ENCODE measurements at regions of chr6 and their contacts with region 1.

Region 1: DNA sequence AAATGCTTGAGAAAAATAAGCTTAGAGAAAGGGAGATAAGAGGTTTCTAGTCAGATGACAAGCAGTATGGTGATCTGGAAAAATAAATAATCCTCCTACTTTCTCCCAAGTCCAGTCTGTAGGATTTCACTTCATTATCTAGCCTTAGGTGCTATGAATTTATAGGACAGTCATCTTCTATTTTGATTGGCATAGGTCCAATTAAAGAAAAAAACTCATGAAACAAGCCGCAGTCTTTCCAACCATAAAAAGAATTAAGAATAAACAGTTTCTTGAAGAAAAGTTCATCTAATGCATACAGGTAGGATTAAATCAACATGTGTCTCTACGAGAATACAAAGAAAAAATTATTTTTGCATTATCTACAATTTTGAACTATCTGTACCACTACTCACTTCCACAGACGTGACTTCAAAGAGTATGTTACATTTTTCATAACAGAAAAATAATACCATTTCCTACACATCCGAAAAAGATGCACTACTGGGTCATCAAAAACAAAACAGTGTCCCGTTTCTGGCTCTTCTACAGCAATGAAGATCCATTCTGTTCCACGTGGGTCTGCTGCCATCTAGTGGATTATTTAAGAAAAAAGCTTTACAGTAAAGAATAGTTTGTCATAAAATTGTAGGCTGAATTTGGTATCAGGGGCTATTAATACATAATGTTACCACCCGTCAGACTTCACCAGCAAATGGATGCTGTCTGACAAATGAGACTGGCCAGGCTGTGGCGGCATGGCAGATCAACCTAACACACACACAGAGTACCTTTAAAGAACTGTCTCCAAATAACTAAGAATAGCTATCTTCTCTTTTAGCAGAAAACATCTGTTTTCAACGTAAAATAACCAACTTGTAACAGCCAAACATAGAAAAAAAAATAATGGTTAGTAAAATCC is 28.9 kb downstream of the STX7 start:
- DNase-seq: peak; percentile 77
- ATAC-seq: peak; percentile 77
- H3K4me3 ChIP-seq: no peak overlapping the region
- H3K27ac ChIP-seq: no peak overlapping the region
- H3K4me1 ChIP-seq: peaks cover 3% of the 10 kb centered on the region; the same call in 1 of the 2 replicates
- H3K27me3 ChIP-seq: no peaks in the 10 kb centered on the region
- CTCF ChIP-seq: peak; percentile 77

Region 2: DNA sequence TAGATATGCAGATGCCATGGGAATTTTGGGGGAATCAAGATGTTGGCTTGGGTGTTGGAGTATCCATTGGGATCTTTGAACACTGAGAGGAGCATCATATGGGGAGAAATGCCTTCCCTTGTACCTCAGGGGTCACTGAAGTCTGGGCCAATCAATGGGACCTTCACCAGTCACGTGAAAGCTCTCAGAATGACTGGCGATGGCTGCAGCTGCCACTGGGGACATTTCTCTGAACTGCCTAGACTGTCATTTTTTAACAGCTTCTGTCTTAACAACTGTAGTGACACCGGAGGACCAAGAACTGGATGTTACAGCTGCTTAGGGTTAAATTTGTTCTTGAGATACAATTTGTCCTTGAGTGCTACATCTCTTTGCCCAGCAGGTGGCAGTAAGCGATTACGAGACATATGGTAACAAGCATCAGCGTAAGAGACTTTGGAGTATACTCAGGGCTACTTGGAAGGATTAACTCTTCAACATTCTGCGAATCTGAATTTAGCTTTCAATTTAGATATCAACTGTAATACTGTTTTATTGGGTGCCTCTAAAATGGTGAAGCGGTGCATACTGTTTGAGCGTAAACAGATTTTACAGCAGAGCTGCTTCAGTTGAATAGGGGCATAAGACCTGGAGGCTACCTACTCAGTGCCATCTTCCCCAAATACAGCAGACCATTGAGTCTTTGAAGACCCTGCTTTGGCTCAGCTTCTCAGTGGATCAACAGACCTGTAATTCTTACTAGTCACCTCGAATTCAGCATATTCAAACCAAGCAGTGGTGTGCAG is 568.9 kb before region 1 on chr6:
- CTCF ChIA-PET with region 1: no interaction called
- POLR2A ChIA-PET with region 1: no interaction called
- intact Hi-C with region 1: loop called (anchors 5 kb)
- DNase-seq: peak; percentile 74
- ATAC-seq: peak; percentile 67
- H3K4me3 ChIP-seq: no peak overlapping the region
- H3K27ac ChIP-seq: no peak overlapping the region
- H3K4me1 ChIP-seq: peaks cover 9% of the 10 kb centered on the region
- H3K27me3 ChIP-seq: no peaks in the 10 kb centered on the region
- CTCF ChIP-seq: peak; percentile 83

Region 3: GRCh38 chr6:132300323-132300949 is 183.6 kb before region 1 on chr6:
- CTCF ChIA-PET with region 1: no interaction called
- POLR2A ChIA-PET with region 1: no interaction called
- intact Hi-C with region 1: loop called (anchors 1 kb)
- DNase-seq: peak; percentile 66
- ATAC-seq: peak; percentile 87
- H3K4me3 ChIP-seq: no peak overlapping the region
- H3K27ac ChIP-seq: no peak overlapping the region
- H3K4me1 ChIP-seq: no peaks in the 10 kb centered on the region
- H3K27me3 ChIP-seq: no peaks in the 10 kb centered on the region
- CTCF ChIP-seq: peak; percentile 70

Region 4: GRCh38 chr6:132320007-132320406 is 164.0 kb before region 1 on chr6:
- CTCF ChIA-PET with region 1: no interaction called
- POLR2A ChIA-PET with region 1: no interaction called
- intact Hi-C with region 1: no loop called
- DNase-seq: no peak
- ATAC-seq: no peak
- H3K4me3 ChIP-seq: no peak overlapping the region
- H3K27ac ChIP-seq: no peak overlapping the region
- H3K4me1 ChIP-seq: no peaks in the 10 kb centered on the region
- H3K27me3 ChIP-seq: no peaks in the 10 kb centered on the region
- CTCF ChIP-seq: no peak

Region 5: GRCh38 chr6:132401120-132401945 is 82.7 kb before region 1 on chr6 and contains the start of gene MOXD1:
- CTCF ChIA-PET with region 1: no interaction called
- POLR2A ChIA-PET with region 1: no interaction called
- intact Hi-C with region 1: loop called (anchors 5 kb)
- DNase-seq: peak; percentile 61
- ATAC-seq: peak; percentile 52
- H3K4me3 ChIP-seq: peak within 1 kb of the TSS; percentile 84
- H3K27ac ChIP-seq: peak within 1 kb of the TSS; percentile 30; the same call in 1 of the 2 replicates
- H3K4me1 ChIP-seq: peaks cover 43% of the 10 kb centered on the region
- H3K27me3 ChIP-seq: no peaks in the 10 kb centered on the region
- CTCF ChIP-seq: no peak
- total RNA-seq, gene MOXD1: 5.0 and 9.9 TPM in 2 replicates

Region 6: DNA sequence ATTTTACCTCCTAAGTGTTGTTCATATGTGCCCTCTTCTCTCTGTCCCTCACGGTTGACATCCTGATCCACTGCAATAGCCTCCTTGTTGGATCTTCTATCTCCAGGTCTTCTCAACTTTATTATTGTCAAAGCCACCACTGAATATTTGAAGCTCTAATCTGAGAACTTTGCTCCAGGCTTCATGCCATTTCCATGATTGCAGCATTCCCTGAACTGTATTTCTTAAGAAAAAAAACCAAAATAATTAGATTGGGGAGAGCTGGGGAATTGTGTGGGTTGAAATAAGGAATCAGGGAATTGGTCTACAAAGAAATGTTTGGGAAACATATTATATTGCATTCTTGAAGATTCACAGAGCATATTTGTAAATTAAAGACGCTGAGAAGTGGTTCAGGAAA is 31.4 kb after region 1 on chr6:
- CTCF ChIA-PET with region 1: no interaction called
- POLR2A ChIA-PET with region 1: no interaction called
- intact Hi-C with region 1: no loop called
- DNase-seq: no peak
- ATAC-seq: no peak
- H3K4me3 ChIP-seq: no peak overlapping the region
- H3K27ac ChIP-seq: no peak overlapping the region
- H3K4me1 ChIP-seq: peaks cover 18% of the 10 kb centered on the region
- H3K27me3 ChIP-seq: no peaks in the 10 kb centered on the region
- CTCF ChIP-seq: no peak

Region 7: GRCh38 chr6:132567566-132567965 is 83.5 kb after region 1 on chr6:
- CTCF ChIA-PET with region 1: no interaction called
- POLR2A ChIA-PET with region 1: no interaction called
- intact Hi-C with region 1: no loop called
- DNase-seq: no peak
- ATAC-seq: no peak
- H3K4me3 ChIP-seq: no peak overlapping the region
- H3K27ac ChIP-seq: no peak overlapping the region
- H3K4me1 ChIP-seq: no peaks in the 10 kb centered on the region
- H3K27me3 ChIP-seq: peaks cover 15% of the 10 kb centered on the region
- CTCF ChIP-seq: no peak

Measured in PC-3 (cell line).